ENCODE measurements at regions of chr16 and their contacts with region 1.

Region 1: GRCh38 chr16:15643048-15643945 is at the start of gene MARF1:
- DNase-seq: peak; percentile 100
- H3K4me3 Mint-ChIP-seq: peak within 1 kb of the TSS; percentile 89
- H3K27ac Mint-ChIP-seq: peak within 1 kb of the TSS; percentile 95
- H3K4me1 Mint-ChIP-seq: peaks cover 30% of the 10 kb centered on the region
- H3K27me3 Mint-ChIP-seq: no peaks in the 10 kb centered on the region
- CTCF ChIP-seq: peak; percentile 37
- total RNA-seq, gene MARF1: 57.6 and 61.3 TPM in 2 replicates

Region 2: DNA sequence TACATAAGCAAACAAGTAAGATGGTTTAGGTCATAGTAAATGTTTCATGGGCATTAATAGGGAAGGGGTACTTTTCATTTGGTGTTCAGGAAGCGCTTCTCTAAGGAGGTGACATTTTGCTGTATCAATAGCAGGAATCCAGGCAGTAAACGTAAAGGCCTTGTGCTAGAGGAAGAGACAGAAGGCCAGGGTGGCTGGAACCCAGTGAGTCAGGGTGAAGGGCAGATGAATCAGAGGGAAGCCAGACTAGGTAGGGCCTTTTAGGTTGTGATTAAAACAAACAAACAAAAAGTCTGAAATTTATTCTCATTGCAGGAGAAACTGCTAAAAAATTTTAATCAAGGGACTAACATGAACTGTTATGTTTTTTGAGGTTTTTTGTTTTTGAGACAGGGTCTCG is 202.4 kb before region 1 on chr16:
- CTCF ChIA-PET with region 1: no interaction called
- intact Hi-C with region 1: loop called (anchors 10 kb)
- DNase-seq: no peak
- H3K4me3 Mint-ChIP-seq: no peak overlapping the region
- H3K27ac Mint-ChIP-seq: peak overlapping the region; percentile 17
- H3K4me1 Mint-ChIP-seq: peaks cover 33% of the 10 kb centered on the region
- H3K27me3 Mint-ChIP-seq: peaks cover 6% of the 10 kb centered on the region
- CTCF ChIP-seq: no peak

Region 3: GRCh38 chr16:15482068-15482747 is 161.1 kb before region 1 on chr16:
- CTCF ChIA-PET with region 1: interaction called, 3 read pairs
- intact Hi-C with region 1: loop called (anchors 1 kb)
- DNase-seq: peak; percentile 86
- H3K4me3 Mint-ChIP-seq: peak overlapping the region; percentile 16
- H3K27ac Mint-ChIP-seq: peak overlapping the region; percentile 83
- H3K4me1 Mint-ChIP-seq: peaks cover 18% of the 10 kb centered on the region
- H3K27me3 Mint-ChIP-seq: no peaks in the 10 kb centered on the region
- CTCF ChIP-seq: no peak

Region 4: GRCh38 chr16:15548482-15548891 is 94.8 kb before region 1 on chr16:
- CTCF ChIA-PET with region 1: interaction called, 9 read pairs
- intact Hi-C with region 1: loop called (anchors 1 kb)
- DNase-seq: peak; percentile 8
- H3K4me3 Mint-ChIP-seq: no peak overlapping the region
- H3K27ac Mint-ChIP-seq: no peak overlapping the region
- H3K4me1 Mint-ChIP-seq: peaks cover 33% of the 10 kb centered on the region
- H3K27me3 Mint-ChIP-seq: no peaks in the 10 kb centered on the region
- CTCF ChIP-seq: no peak

Region 5: GRCh38 chr16:15592324-15592723 is 51.0 kb before region 1 on chr16:
- CTCF ChIA-PET with region 1: interaction called, 4 read pairs
- intact Hi-C with region 1: loop called (anchors 2 kb)
- DNase-seq: peak; percentile 48
- H3K4me3 Mint-ChIP-seq: no peak overlapping the region
- H3K27ac Mint-ChIP-seq: peak overlapping the region; percentile 73
- H3K4me1 Mint-ChIP-seq: peaks cover 32% of the 10 kb centered on the region
- H3K27me3 Mint-ChIP-seq: no peaks in the 10 kb centered on the region
- CTCF ChIP-seq: no peak

Region 6: GRCh38 chr16:16083421-16084156 is 440.3 kb after region 1 on chr16:
- CTCF ChIA-PET with region 1: no interaction called
- intact Hi-C with region 1: no loop called
- DNase-seq: peak; percentile 50
- H3K4me3 Mint-ChIP-seq: no peak overlapping the region
- H3K27ac Mint-ChIP-seq: no peak overlapping the region
- H3K4me1 Mint-ChIP-seq: no peaks in the 10 kb centered on the region
- H3K27me3 Mint-ChIP-seq: no peaks in the 10 kb centered on the region
- CTCF ChIP-seq: no peak